ENCODE measurements at regions of chr2 and their contacts with region 1.

Region 1: GRCh38 chr2:188291617-188292347 is at the start of gene GULP1:
- DNase-seq: peak; percentile 75
- ATAC-seq: peak; percentile 45
- H3K4me3 ChIP-seq: peak within 1 kb of the TSS; percentile 87
- H3K27ac ChIP-seq: peak within 1 kb of the TSS; percentile 83
- H3K4me1 ChIP-seq: peaks cover 33% of the 10 kb centered on the region
- H3K27me3 ChIP-seq: no peaks in the 10 kb centered on the region
- CTCF ChIP-seq: peak; percentile 77
- total RNA-seq, gene GULP1: 23.1 and 25.5 TPM in 2 replicates

Region 2: DNA sequence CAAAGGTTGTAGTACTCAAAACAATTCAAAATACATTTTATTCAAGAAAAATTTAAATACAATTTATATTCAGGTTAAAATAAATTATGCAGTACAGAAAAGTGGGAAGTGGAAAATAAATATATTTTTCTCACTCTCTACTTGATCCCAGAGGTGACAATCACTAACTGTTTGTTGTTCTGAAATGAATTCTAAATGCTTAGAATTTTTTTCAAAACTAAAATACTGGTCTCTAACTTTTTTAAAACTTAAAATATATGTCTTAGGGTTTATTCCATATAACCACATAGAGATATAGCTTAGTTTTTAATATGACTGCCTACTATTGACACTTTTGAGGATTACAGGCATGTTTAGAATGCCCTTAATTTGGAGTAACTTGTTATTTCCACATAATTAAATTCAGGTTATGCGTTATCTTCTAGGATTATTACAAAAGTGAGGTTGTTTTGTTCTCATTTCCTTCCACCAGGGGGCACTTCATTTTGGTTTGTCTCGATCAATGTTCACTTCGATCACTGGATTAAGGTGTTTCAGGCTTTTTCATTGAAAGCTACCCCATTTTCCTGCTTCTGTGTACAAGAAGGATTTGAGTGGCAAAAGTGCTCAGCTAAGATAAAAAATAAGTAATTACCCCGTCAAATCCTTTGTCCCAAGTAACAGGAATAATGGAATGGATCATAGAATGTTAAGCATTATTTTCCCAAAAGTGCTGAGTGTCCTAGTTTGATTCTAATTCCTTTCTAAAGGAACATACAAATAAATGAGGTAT is 710.5 kb before region 1 on chr2:
- CTCF ChIA-PET with region 1: no interaction called
- POLR2A ChIA-PET with region 1: no interaction called
- intact Hi-C with region 1: loop called (anchors 5 kb)
- DNase-seq: peak; percentile 75
- ATAC-seq: peak; percentile 37
- H3K4me3 ChIP-seq: peak overlapping the region; percentile 35
- H3K27ac ChIP-seq: peak overlapping the region; percentile 72
- H3K4me1 ChIP-seq: peaks cover 23% of the 10 kb centered on the region
- H3K27me3 ChIP-seq: no peaks in the 10 kb centered on the region
- CTCF ChIP-seq: peak; percentile 82

Region 3: GRCh38 chr2:187851955-187852561 is 439.7 kb before region 1 on chr2:
- CTCF ChIA-PET with region 1: no interaction called
- POLR2A ChIA-PET with region 1: no interaction called
- intact Hi-C with region 1: loop called (anchors 5 kb)
- DNase-seq: no peak
- ATAC-seq: no peak
- H3K4me3 ChIP-seq: no peak overlapping the region
- H3K27ac ChIP-seq: no peak overlapping the region
- H3K4me1 ChIP-seq: no peaks in the 10 kb centered on the region
- H3K27me3 ChIP-seq: no peaks in the 10 kb centered on the region
- CTCF ChIP-seq: no peak

Region 4: DNA sequence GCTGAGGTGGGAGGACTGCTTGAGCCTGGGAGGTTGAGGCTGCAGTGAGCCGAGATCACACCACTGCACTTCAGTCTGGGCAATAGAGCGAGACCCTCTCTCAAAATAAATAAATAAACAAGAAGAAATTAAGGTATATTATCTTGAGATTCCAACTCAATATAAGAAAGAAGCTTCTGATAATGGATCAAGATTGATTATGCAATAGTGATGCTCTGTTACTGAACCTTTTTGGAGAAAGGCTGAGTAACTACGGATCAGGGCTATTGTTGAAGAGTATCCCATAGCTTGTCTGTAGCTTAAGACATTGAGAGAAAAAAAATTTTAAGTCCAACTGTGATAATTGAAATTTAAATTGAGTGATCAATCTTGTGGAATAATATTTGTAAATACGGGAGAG is 17.6 kb after region 1 on chr2:
- CTCF ChIA-PET with region 1: no interaction called
- POLR2A ChIA-PET with region 1: no interaction called
- intact Hi-C with region 1: no loop called
- DNase-seq: no peak
- ATAC-seq: no peak
- H3K4me3 ChIP-seq: no peak overlapping the region
- H3K27ac ChIP-seq: no peak overlapping the region
- H3K4me1 ChIP-seq: peaks cover 19% of the 10 kb centered on the region
- H3K27me3 ChIP-seq: no peaks in the 10 kb centered on the region
- CTCF ChIP-seq: no peak

Region 5: GRCh38 chr2:188369365-188369764 is 77.6 kb after region 1 on chr2:
- CTCF ChIA-PET with region 1: interaction called, 4 read pairs
- POLR2A ChIA-PET with region 1: no interaction called
- intact Hi-C with region 1: loop called (anchors 1 kb)
- DNase-seq: peak; percentile 82
- ATAC-seq: peak; percentile 88
- H3K4me3 ChIP-seq: no peak overlapping the region
- H3K27ac ChIP-seq: no peak overlapping the region
- H3K4me1 ChIP-seq: no peaks in the 10 kb centered on the region
- H3K27me3 ChIP-seq: no peaks in the 10 kb centered on the region
- CTCF ChIP-seq: peak; percentile 91

Region 6: DNA sequence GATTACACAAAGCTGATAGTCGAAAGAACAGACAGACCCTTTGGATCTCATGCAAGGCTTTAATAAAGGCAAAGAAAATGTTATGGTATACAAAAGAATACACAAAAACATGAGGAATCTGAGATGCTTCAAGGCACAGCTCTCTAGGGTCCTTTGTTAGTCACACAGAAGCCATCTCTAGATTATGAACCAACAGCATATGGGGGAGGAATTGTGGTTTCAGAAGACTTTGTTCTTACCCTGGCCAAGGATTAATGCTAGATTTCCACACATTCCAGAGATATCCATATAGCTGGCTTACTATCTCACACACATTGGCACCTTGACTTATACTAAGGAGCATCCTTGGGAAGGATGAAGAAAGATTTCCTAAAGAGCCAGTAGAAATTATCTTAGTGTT is 205.9 kb after region 1 on chr2:
- CTCF ChIA-PET with region 1: no interaction called
- POLR2A ChIA-PET with region 1: no interaction called
- intact Hi-C with region 1: no loop called
- DNase-seq: no peak
- ATAC-seq: no peak
- H3K4me3 ChIP-seq: no peak overlapping the region
- H3K27ac ChIP-seq: no peak overlapping the region
- H3K4me1 ChIP-seq: no peaks in the 10 kb centered on the region
- H3K27me3 ChIP-seq: no peaks in the 10 kb centered on the region
- CTCF ChIP-seq: no peak

Region 7: DNA sequence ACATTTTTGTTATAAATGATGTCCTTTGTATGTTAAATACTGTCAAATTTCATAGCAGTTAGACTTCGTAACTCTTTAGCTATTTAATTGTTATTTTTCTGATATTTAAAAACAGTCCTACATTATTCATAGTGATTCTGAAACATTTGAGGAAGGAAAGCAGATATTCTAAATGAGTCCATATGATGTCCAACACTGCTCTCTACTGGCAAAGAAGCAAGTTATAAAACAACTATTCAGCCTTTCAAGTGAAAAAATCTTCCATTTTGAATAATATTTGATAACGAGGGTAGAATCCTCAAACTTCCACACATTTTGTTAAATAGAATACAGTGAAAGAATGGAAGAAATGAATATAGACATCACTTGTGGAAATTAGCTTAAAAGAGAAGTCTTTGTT is 220.7 kb after region 1 on chr2:
- CTCF ChIA-PET with region 1: interaction called, 3 read pairs
- POLR2A ChIA-PET with region 1: interaction called, 5 read pairs
- intact Hi-C with region 1: loop called (anchors 1 kb)
- DNase-seq: peak; percentile 65
- ATAC-seq: peak; percentile 71
- H3K4me3 ChIP-seq: no peak overlapping the region
- H3K27ac ChIP-seq: no peak overlapping the region
- H3K4me1 ChIP-seq: no peaks in the 10 kb centered on the region
- H3K27me3 ChIP-seq: no peaks in the 10 kb centered on the region
- CTCF ChIP-seq: peak; percentile 82